Left ventricle myocardium superior (tissue), 1 donor: ENCODE measurements at regions of chr18 and their contacts with region 1.

Region 1: DNA sequence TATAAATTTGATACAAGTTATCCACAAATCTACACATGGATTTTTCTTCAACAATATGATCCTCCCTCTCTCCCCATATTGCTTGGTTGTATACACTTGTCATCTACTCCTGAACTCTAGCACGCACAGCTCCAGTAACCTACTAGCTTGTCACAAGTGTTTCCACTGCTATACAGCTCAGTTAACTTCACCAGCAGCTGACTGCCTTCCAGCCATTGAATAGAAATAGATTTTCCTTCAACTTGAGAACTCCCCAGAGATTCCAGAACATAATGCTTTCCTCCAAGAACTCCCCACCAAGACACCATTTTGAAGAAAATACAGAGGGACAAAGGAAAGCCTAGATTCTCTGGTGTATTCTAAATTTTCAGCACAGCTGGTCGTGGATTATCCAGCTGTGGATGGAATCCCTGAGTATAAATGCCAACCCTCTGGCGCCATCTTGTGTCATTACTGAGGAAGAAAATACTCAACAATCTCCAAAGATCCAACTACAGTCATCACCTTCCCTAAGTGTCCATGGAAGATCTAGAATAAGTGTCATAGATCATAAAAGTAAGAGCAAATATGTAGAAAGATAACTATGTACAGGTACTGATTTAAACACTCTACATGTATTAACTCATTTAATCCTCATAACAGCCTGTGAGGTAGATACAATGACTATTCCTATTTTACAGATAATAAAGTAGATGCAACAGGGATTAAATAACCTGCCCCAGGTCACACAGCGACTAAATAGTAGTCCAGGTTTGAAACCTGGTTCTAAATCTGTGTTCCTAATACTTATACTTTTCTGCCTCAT is 156.7 kb downstream of the ARHGAP28 start:
- DNase-seq: no peak
- ATAC-seq: peak; percentile 72

Region 2: DNA sequence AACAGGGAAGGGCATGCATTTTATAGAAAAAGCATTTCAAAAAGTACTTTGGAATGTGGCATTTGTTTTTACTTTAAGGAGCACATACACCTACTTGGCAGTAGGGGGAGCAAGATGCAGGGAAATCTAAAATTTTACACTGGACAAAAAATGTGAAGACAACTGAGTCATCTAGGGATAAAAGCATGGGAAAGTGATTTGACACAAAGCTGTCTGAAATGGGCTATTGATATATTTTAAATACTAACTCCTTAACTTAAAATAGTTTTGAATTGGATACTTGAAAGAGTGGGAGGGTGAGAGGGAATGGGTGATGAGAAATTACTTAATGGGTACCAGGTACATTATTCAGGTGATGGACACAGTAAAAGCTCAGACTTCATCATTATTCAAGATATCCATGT is 1006.7 kb before region 1 on chr18:
- intact Hi-C with region 1: loop called (anchors 10 kb)
- DNase-seq: no peak
- ATAC-seq: no peak

Region 3: DNA sequence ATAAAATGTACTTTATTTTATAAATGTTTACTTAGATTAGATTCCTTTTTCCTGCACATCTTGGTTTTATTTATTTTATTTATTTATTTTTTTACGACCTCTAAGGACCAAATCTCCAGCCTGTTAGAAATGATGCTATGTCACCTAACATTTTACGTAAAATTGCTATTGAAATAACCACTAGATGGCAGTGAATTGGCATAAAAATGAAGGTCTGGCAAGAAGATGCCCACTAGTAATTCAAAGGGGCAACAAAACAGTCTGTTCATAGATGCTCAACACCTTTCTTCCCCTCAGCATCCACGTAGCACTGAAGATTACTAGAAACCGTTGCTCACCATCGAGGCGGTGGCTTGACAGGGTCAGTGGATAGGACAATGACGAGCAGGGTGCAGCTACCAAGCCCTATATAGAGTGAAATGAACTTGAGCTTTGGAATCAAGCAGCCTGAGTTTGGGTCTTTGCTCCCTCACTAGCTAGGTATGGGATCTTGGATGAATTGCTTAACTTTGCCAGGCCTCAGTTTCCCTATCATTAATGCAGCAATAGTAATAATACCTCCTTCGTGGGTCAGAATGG is 342.8 kb before region 1 on chr18:
- intact Hi-C with region 1: loop called (anchors 5 kb)
- DNase-seq: no peak
- ATAC-seq: no peak

Region 4: GRCh38 chr18:6708890-6709289 is 177.3 kb before region 1 on chr18:
- intact Hi-C with region 1: no loop called
- DNase-seq: no peak
- ATAC-seq: no peak